ENCODE measurements at regions of chr9 and their contacts with region 1.

Region 1: GRCh38 chr9:126301985-126302603 is 24.5 kb upstream of the MVB12B start:
- DNase-seq: peak in 1 of 2 donors; percentile 71
- ATAC-seq: peak in 7 of 8 donors; percentile 80 to 90 (median 85)
- H3K4me3 ChIP-seq: no peak overlapping the region
- H3K27ac ChIP-seq: no peak overlapping the region
- H3K4me1 ChIP-seq: no peaks in the 10 kb centered on the region
- H3K27me3 ChIP-seq: peaks cover 0 to 3% (median 0%) of the 10 kb centered on the region in 7 donors
- CTCF ChIP-seq: peak; percentile 38 to 87 (median 73)

Region 2: DNA sequence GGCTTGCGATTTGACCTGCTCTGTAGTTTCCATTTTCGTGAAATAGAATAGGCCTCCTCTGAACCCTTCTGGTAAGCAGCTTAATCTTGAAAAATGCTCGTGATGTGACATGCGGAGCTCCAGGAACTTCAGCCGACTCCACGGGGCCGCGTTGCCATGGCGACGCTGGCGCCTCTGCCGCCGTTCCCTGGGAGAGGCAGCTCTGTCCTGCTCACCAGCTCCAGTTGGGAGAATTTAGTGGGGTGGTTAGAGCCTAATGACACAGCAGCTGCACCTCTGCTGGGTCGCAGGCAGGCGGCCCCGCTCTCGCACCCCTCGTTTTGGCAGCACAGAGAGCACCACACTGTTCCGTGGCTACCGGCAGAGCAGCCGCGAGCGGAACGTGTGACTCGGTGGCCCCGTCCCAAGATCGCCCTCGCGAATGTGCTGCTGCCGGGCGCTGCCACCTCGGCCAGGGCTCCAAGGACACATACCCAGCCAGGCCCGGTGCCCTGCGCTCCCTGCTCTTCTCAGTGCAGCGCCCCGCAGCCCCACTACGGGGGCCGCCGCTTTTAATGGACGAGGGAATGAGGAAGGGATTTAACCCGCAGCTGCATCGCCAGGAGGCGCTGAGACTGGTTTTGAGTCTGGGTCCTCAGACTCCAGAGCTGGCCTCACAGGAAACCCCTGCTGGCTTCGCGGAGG is 180.4 kb after region 1 on chr9:
- intact Hi-C with region 1: loop called in 1 of 10 experiments (anchors 10 kb)
- DNase-seq: peak in 1 of 2 donors; percentile 59
- ATAC-seq: peak in 7 of 8 donors; percentile 33 to 62 (median 50)
- H3K4me3 ChIP-seq: peak overlapping the region in 3 of 10 donors; percentile 1 to 17 (median 2)
- H3K27ac ChIP-seq: no peak overlapping the region
- H3K4me1 ChIP-seq: peaks cover 0 to under 1% (median 0%) of the 10 kb centered on the region in 9 donors
- H3K27me3 ChIP-seq: no peaks in the 10 kb centered on the region
- CTCF ChIP-seq: no peak

Region 3: DNA sequence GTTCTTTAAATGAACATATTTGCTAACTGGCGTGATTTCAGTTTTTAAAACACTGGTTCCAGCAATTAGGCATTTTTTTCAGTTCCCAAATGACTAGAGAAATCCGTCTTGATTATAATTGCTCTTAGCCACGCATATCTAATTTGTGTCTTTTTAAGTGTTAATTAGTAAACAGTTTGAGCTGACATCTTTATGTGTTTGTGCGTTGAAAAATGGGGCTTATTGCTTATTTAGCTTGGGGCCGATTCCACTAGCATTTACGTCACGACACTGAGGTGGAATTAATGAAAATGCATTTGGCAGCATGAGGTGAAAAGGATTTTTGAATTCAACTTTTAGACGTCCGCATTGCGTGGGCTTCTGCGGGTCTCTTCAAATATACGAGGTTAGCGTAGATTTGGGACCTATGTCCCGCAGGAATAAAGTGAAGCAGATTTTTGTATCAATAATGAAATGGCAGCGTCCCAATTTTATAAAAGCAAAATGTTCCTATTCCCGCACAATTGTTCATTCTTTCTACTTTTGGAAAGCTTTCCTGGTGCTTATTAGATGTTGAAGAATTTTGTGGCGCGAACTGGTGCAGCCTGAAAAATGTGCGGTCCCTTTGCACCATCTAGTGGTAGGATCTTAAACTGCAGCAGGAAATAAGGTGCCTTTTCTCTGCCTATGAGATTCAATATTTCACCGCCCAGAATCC is 188.9 kb after region 1 on chr9:
- intact Hi-C with region 1: loop called (anchors 2 to 10 kb)
- DNase-seq: peak in 1 of 2 donors; percentile 55
- ATAC-seq: peak in 5 of 8 donors; percentile 57 to 69 (median 59)
- H3K4me3 ChIP-seq: no peak overlapping the region
- H3K27ac ChIP-seq: no peak overlapping the region
- H3K4me1 ChIP-seq: peaks cover 0 to 16% (median 0%) of the 10 kb centered on the region in 9 donors
- H3K27me3 ChIP-seq: no peaks in the 10 kb centered on the region
- CTCF ChIP-seq: peak; percentile 83 to 97 (median 90)